ENCODE measurements at regions of chr4 and their contacts with region 1.

Region 1: DNA sequence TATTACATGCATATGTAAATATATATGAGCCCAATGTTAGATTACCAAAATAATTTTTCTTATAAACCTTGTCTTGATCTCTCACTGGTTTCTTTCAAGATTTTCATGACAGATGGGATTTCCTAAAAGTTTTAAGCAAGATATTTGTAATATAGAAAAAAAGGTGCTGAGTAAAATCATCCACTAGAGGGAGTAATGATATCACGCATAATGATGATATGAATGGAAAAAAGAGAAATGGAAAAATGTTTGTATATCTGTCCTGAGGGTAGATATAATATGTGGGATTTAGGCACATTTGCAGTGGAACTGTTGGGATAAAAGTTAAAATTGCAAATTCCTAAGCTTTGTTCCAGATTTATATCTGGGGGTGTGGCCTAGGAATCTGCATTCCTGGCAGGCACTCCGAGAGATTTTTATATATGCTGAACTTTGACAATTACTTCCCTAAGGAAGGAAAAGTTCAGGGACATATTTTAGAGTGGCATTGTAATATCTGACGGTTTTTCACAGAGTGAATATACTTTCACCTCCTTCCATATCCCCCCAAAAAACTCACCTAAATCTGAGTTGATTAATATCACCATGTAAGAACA is 60.5 kb downstream of the TMA16 start:
- DNase-seq: peak; percentile 8
- H3K4me3 ChIP-seq: no peak overlapping the region
- H3K27ac ChIP-seq: no peak overlapping the region
- H3K4me1 ChIP-seq: peaks cover 11% of the 10 kb centered on the region
- H3K27me3 ChIP-seq: no peaks in the 10 kb centered on the region
- CTCF ChIP-seq: peak; percentile 65 to 68

Region 2: DNA sequence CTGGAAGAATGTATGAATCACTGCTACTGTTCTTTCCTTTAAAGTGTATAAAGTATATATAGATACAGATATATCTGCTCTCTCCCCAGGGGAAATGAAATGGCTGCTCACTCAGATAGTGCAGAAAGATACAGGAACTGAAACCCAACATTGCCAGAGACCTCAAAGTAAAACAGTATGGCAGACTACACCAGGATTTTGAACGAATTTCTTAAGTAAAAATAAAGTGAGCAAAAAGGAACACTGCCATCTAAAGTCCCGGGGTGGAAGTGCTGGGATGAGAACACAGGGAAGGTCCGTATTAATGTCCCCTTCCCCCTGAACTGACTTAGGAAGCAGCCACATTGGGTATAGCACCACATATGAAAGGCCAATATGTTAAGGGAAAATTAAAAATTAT is 32.9 kb after region 1 on chr4:
- CTCF ChIA-PET with region 1: no interaction called
- dilution Hi-C with region 1: no loop called
- in situ Hi-C with region 1: no loop called
- intact Hi-C with region 1: no loop called
- DNase-seq: no peak
- H3K4me3 ChIP-seq: no peak overlapping the region
- H3K27ac ChIP-seq: no peak overlapping the region
- H3K4me1 ChIP-seq: no peaks in the 10 kb centered on the region
- H3K27me3 ChIP-seq: no peaks in the 10 kb centered on the region
- CTCF ChIP-seq: peak in 1 of 2 donors; percentile 9

Region 3: GRCh38 chr4:163744861-163745260 is 189.9 kb after region 1 on chr4:
- CTCF ChIA-PET with region 1: no interaction called
- dilution Hi-C with region 1: no loop called
- in situ Hi-C with region 1: loop called (anchors 10 to 25 kb)
- intact Hi-C with region 1: no loop called
- DNase-seq: no peak
- H3K4me3 ChIP-seq: no peak overlapping the region
- H3K27ac ChIP-seq: no peak overlapping the region
- H3K4me1 ChIP-seq: no peaks in the 10 kb centered on the region
- H3K27me3 ChIP-seq: no peaks in the 10 kb centered on the region
- CTCF ChIP-seq: no peak

Region 4: DNA sequence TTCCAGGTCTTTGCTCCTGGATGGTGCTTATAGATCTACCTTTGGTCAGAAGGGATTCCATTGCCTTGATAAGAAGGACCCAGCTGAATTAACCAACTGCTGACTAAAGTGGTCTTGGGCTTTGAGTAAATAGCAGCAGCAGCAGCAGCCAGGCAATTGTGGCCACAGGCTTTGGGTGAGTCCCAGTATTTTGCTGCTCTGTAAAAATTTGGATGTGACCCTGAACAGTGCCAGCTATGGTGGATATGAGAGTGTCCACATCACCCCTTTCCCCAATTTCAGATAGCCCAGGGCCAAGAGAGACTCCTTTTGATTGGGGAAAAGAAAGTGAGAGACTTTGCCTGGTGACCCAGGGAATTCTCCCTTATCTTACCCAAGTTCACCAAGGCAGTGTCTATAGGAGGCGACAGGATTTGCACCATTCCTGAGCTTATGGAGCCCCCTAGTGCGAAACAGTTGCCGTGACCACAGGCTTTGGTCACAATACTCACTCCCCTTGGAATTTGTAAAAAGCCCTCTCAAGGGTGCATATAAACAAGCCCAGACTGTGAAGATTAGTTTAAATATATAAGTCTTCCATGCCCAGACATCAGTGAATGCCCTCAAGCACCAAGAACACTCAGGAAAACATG is 457.5 kb after region 1 on chr4:
- CTCF ChIA-PET with region 1: interaction called, 19 read pairs
- dilution Hi-C with region 1: no loop called
- in situ Hi-C with region 1: loop called (anchors 10 to 25 kb)
- intact Hi-C with region 1: loop called (anchors 1 kb)
- DNase-seq: peak; percentile 16
- H3K4me3 ChIP-seq: no peak overlapping the region
- H3K27ac ChIP-seq: no peak overlapping the region
- H3K4me1 ChIP-seq: no peaks in the 10 kb centered on the region
- H3K27me3 ChIP-seq: no peaks in the 10 kb centered on the region
- CTCF ChIP-seq: peak; percentile 50 to 64

Region 5: DNA sequence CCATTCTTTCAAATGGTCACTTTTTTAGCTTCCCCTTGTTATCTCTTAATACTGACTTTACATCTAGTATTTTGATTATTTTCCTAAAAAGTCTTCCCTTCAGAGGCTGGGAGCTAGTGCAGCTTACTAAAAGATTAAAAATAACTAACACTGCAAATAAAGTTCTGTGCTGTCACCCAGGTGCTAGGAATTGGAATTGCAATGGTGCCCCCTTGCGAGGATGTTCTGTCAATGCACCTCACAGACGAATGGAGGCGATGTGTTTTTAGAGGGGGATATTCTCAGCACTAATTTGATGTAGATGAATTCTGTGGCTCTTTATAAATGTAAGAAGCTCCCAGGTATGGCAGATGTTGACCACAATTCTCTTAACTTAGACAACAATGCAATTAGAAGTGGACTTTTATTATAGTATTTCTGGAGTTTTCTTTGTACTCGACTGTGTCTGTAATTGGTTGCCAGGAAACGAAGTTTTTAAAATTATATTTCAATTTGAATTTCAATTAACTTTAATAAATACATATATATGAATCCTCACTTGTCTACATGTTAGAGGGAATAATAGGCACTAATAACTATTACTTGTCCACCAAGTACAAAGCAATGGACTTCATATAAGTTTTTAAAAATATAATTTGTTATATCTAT is 1177.0 kb after region 1 on chr4:
- CTCF ChIA-PET with region 1: no interaction called
- dilution Hi-C with region 1: no loop called
- in situ Hi-C with region 1: no loop called
- intact Hi-C with region 1: loop called (anchors 5 kb)
- DNase-seq: peak; percentile 15
- H3K4me3 ChIP-seq: no peak overlapping the region
- H3K27ac ChIP-seq: no peak overlapping the region
- H3K4me1 ChIP-seq: no peaks in the 10 kb centered on the region
- H3K27me3 ChIP-seq: no peaks in the 10 kb centered on the region
- CTCF ChIP-seq: peak; percentile 78 to 92

Region 6: GRCh38 chr4:164753872-164754488 is 1199.0 kb after region 1 on chr4 and contains the start of gene SMIM31:
- CTCF ChIA-PET with region 1: no interaction called
- dilution Hi-C with region 1: no loop called
- in situ Hi-C with region 1: loop called in 1 of 2 experiments (anchors 10 kb)
- intact Hi-C with region 1: no loop called
- DNase-seq: no peak
- H3K4me3 ChIP-seq: no peak within 1 kb of the TSS
- H3K27ac ChIP-seq: no peak within 1 kb of the TSS
- H3K4me1 ChIP-seq: no peaks in the 10 kb centered on the region
- H3K27me3 ChIP-seq: no peaks in the 10 kb centered on the region
- CTCF ChIP-seq: no peak
- total RNA-seq, gene SMIM31: not detected

Measured in mammary epithelial cell (primary cell).